Naive thymus-derived CD4-positive, alpha-beta T cell (primary cell): ENCODE measurements at regions of chr12 and their contacts with region 1.

Region 1: GRCh38 chr12:111942557-111942956 is 70.4 kb downstream of the TMEM116 start:
- DNase-seq: no peak
- ATAC-seq: no peak
- H3K4me3 ChIP-seq: no peak overlapping the region
- H3K4me3 Mint-ChIP-seq: no peak overlapping the region
- H3K27ac ChIP-seq: no peak overlapping the region
- H3K27ac Mint-ChIP-seq: no peak overlapping the region
- H3K4me1 ChIP-seq: peaks cover 0 to 3% of the 10 kb centered on the region in 2 donors
- H3K4me1 Mint-ChIP-seq: peaks cover 0 to 25% (median 12%) of the 10 kb centered on the region in 7 donors
- H3K27me3 ChIP-seq: no peaks in the 10 kb centered on the region
- H3K27me3 Mint-ChIP-seq: no peaks in the 10 kb centered on the region

Region 2: GRCh38 chr12:112005419-112006395 is 63.1 kb after region 1 on chr12:
- CTCF ChIA-PET with region 1: no interaction called
- POLR2A ChIA-PET with region 1: interaction called, 14 read pairs
- intact Hi-C with region 1: no loop called
- DNase-seq: no peak
- ATAC-seq: no peak
- H3K4me3 ChIP-seq: no peak overlapping the region
- H3K4me3 Mint-ChIP-seq: no peak overlapping the region
- H3K27ac ChIP-seq: peak overlapping the region; percentile 50
- H3K27ac Mint-ChIP-seq: peak overlapping the region in 8 of 9 donors; percentile 21 to 97 (median 71)
- H3K4me1 ChIP-seq: peaks cover 21 to 23% of the 10 kb centered on the region in 2 donors
- H3K4me1 Mint-ChIP-seq: peaks cover 29 to 70% (median 57%) of the 10 kb centered on the region in 7 donors
- H3K27me3 ChIP-seq: no peaks in the 10 kb centered on the region
- H3K27me3 Mint-ChIP-seq: no peaks in the 10 kb centered on the region

Region 3: GRCh38 chr12:112025808-112026375 is 83.3 kb after region 1 on chr12:
- CTCF ChIA-PET with region 1: interaction called, 4 read pairs
- POLR2A ChIA-PET with region 1: interaction called, 5 read pairs
- intact Hi-C with region 1: loop called in 1 of 2 experiments (anchors 5 kb)
- DNase-seq: no peak
- ATAC-seq: no peak
- H3K4me3 ChIP-seq: no peak overlapping the region
- H3K4me3 Mint-ChIP-seq: peak overlapping the region in 1 of 10 donors; percentile 1
- H3K27ac ChIP-seq: peak overlapping the region; percentile 44
- H3K27ac Mint-ChIP-seq: peak overlapping the region; percentile 51 to 94 (median 72)
- H3K4me1 ChIP-seq: peaks cover 0 to 7% of the 10 kb centered on the region in 2 donors
- H3K4me1 Mint-ChIP-seq: peaks cover 14 to 56% (median 34%) of the 10 kb centered on the region in 7 donors
- H3K27me3 ChIP-seq: no peaks in the 10 kb centered on the region
- H3K27me3 Mint-ChIP-seq: no peaks in the 10 kb centered on the region

Region 4: DNA sequence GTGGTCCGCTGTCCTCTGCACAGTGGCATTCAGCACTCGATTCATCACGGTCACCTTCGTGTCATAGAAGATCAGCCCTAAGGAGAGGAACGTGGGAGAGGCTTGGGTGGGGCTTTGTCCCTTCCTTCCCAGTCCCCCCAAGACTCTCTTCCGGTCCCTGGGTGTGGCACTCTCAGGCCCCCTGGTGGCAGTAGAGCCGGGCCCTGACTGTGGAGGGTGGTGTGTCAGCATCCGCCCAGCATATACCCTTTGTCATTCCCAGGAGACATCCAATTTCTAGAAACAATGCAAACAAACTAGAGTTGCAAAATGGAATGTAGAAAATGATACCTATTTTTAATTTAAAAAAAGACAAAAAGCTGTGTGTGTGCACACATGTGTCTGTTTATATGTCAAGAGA is 227.8 kb after region 1 on chr12:
- CTCF ChIA-PET with region 1: no interaction called
- POLR2A ChIA-PET with region 1: no interaction called
- intact Hi-C with region 1: loop called in 1 of 2 experiments (anchors 5 kb)
- DNase-seq: peak in 1 of 9 donors; percentile 9
- ATAC-seq: peak; percentile 45
- H3K4me3 ChIP-seq: no peak overlapping the region
- H3K4me3 Mint-ChIP-seq: no peak overlapping the region
- H3K27ac ChIP-seq: no peak overlapping the region
- H3K27ac Mint-ChIP-seq: peak overlapping the region in 4 of 9 donors; percentile 39 to 70 (median 44)
- H3K4me1 ChIP-seq: no peaks in the 10 kb centered on the region
- H3K4me1 Mint-ChIP-seq: peaks cover 0 to 2% (median 0%) of the 10 kb centered on the region in 7 donors
- H3K27me3 ChIP-seq: no peaks in the 10 kb centered on the region
- H3K27me3 Mint-ChIP-seq: no peaks in the 10 kb centered on the region